ENCODE measurements at regions of chr16 and their contacts with region 1.

Region 1: DNA sequence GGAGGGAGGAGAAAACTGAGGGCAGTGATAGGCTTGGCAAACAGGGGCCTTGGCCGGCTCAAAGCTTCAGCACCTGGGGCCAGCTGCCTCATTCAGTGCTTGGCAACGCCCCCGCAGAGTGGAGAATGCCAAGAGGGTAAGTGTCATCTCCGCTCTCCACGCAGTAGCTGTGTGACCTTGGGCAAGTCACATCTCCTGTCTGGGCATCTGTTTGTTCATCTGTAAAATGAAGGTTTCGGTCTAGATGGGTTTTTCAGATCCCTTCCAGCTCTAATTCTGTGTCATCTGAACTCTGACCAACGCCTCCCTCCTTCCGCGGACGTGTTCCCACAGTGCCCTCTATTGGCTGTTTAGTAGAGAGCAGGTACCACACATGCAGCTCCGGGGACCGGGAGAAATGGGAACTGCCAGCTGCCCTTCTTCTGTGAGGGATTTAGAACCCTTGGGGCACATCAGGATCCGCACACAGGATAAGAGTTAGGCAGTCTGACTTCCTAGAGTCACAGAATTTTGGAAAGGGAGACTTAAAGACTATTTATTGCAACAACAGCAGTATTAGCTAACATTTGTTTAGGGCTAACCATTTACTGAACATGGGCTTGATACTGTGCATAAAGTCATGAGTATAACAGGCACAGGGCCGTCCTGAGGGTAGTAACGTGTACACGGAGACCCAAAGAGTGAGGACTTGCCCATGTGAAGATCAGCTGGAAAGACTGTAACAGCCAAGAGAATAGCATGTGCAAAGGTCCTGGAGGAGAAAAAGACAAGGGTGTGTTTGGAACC is 26.8 kb downstream of the GP2 start:
- DNase-seq: peak; percentile 68
- H3K4me3 ChIP-seq: no peak overlapping the region
- H3K27ac ChIP-seq: no peak overlapping the region
- H3K4me1 ChIP-seq: no peaks in the 10 kb centered on the region
- H3K27me3 ChIP-seq: peaks cover 5% of the 10 kb centered on the region
- CTCF ChIP-seq: peak; percentile 85

Region 2: GRCh38 chr16:19559247-19559910 is 741.1 kb before region 1 on chr16:
- CTCF ChIA-PET with region 1: interaction called, 3 read pairs
- POLR2A ChIA-PET with region 1: no interaction called
- intact Hi-C with region 1: loop called (anchors 5 kb)
- DNase-seq: peak; percentile 69
- H3K4me3 ChIP-seq: no peak overlapping the region
- H3K27ac ChIP-seq: no peak overlapping the region
- H3K4me1 ChIP-seq: no peaks in the 10 kb centered on the region
- H3K27me3 ChIP-seq: no peaks in the 10 kb centered on the region
- CTCF ChIP-seq: peak; percentile 80

Region 3: DNA sequence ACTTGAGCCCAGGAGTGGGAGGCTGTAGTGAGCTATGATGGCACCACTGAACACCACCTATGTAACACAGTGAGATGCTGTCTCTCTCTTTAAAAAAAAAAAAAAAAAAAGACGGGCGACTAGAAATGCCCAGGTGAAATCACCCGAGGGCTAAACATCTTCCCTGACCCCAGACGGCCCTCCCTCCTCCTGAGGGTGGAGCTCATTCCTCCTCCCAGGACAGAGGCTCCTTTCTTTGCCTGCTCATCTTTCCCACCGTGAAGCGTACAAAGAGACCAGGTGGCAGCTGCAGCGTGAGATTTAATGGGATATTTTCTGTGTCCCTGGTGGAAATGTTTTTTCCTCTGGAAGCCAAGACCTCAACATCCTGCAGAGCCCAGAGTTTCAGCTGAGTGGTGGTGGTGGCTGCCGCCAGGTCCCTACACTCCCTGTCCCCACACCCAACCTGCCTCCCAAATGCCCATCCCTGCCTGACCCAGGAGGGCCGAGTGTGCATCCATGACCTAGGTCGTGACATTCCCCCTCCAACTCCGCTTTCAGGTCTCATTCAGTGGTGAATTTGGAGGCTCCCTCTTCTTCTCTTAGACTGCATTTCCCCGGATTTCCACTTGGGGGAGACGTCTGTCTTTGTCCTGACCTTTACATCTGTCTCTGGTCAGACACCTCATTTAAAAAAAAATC is 401.4 kb before region 1 on chr16:
- CTCF ChIA-PET with region 1: interaction called, 13 read pairs
- POLR2A ChIA-PET with region 1: no interaction called
- intact Hi-C with region 1: loop called (anchors 1 kb)
- DNase-seq: peak; percentile 64
- H3K4me3 ChIP-seq: no peak overlapping the region
- H3K27ac ChIP-seq: no peak overlapping the region
- H3K4me1 ChIP-seq: no peaks in the 10 kb centered on the region
- H3K27me3 ChIP-seq: no peaks in the 10 kb centered on the region
- CTCF ChIP-seq: peak; percentile 82

Region 4: DNA sequence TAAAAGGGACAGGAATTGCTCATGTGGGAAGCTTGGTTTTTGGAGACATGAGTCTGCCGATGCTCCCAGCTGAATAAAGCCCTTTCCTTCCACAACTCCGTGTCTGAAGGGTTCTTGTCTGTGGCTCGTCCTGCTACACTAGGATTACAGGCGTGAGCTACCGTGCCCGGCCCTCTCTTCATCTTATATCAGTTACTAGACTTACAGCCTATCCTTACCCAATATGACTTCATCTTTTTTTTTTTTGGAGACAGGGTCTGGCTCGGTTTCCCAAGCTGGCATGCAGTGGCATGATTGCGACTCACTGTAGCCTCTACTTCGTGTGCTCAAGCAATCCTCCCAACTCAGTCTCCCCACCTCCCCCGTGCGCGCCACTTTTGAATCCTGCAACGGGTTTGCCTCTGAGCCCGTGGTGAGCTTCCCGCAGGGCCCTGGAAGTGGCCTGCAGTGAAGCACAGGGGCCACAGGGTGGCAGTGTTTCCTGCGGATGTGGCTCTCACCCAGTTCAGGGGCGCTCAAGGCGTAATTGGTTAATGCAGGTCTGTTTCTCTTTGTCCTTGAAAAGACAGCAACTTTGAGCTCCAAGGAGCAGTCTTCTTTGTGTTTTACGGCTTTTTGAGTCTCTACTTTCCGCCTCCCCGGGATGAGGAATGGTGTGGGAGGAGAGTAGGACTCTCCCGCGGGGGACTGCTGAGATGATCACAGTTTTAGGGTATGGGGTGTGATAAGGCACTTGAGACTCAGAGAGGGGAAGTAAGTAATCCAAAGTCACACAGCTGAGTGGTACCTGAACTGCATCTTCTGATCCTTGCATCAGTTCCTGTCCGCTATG is 393.1 kb before region 1 on chr16:
- CTCF ChIA-PET with region 1: interaction called, 77 read pairs
- POLR2A ChIA-PET with region 1: no interaction called
- intact Hi-C with region 1: loop called (anchors 2 kb)
- DNase-seq: peak; percentile 83
- H3K4me3 ChIP-seq: no peak overlapping the region
- H3K27ac ChIP-seq: no peak overlapping the region
- H3K4me1 ChIP-seq: no peaks in the 10 kb centered on the region
- H3K27me3 ChIP-seq: no peaks in the 10 kb centered on the region
- CTCF ChIP-seq: peak; percentile 98

Measured in A673 (cell line).